ENCODE measurements at regions of chr19 and their contacts with region 1.

Region 1: GRCh38 chr19:30682999-30683536 is 310.9 kb downstream of the ZNF536 start:
- DNase-seq: no peak
- H3K4me3 ChIP-seq: no peak overlapping the region
- H3K27ac ChIP-seq: no peak overlapping the region
- H3K4me1 ChIP-seq: peaks cover 0 to 26% (median 19%) of the 10 kb centered on the region in 4 donors
- H3K27me3 ChIP-seq: peaks cover 0 to 43% (median 0%) of the 10 kb centered on the region in 4 donors
- CTCF ChIP-seq: peak; percentile 89 to 96 (median 91)
- EP300 ChIP-seq: no peak
- POLR2A ChIP-seq: no peak

Region 2: GRCh38 chr19:30630289-30631079 is 52.6 kb before region 1 on chr19:
- intact Hi-C with region 1: no loop called
- DNase-seq: peak; percentile 74
- H3K4me3 ChIP-seq: no peak overlapping the region
- H3K27ac ChIP-seq: no peak overlapping the region
- H3K4me1 ChIP-seq: peaks cover 0 to 4% (median 0%) of the 10 kb centered on the region in 4 donors
- H3K27me3 ChIP-seq: peaks cover 0 to 8% (median 0%) of the 10 kb centered on the region in 4 donors
- CTCF ChIP-seq: no peak
- EP300 ChIP-seq: no peak
- POLR2A ChIP-seq: no peak

Region 3: GRCh38 chr19:30742406-30742938 is 59.4 kb after region 1 on chr19:
- intact Hi-C with region 1: no loop called
- DNase-seq: no peak
- H3K4me3 ChIP-seq: no peak overlapping the region
- H3K27ac ChIP-seq: no peak overlapping the region
- H3K4me1 ChIP-seq: no peaks in the 10 kb centered on the region
- H3K27me3 ChIP-seq: peaks cover 0 to 22% (median 0%) of the 10 kb centered on the region in 4 donors
- CTCF ChIP-seq: no peak
- EP300 ChIP-seq: no peak
- POLR2A ChIP-seq: no peak

Region 4: GRCh38 chr19:31350701-31351068 is 667.6 kb after region 1 on chr19:
- intact Hi-C with region 1: loop called (anchors 10 kb)
- DNase-seq: no peak
- H3K4me3 ChIP-seq: peak overlapping the region; percentile 76 to 98 (median 88)
- H3K27ac ChIP-seq: peak overlapping the region; percentile 93 to 99 (median 96)
- H3K4me1 ChIP-seq: peaks cover 21 to 67% (median 53%) of the 10 kb centered on the region in 4 donors
- H3K27me3 ChIP-seq: peaks cover 0 to 12% (median 0%) of the 10 kb centered on the region in 4 donors
- CTCF ChIP-seq: no peak
- EP300 ChIP-seq: no peak
- POLR2A ChIP-seq: no peak

Region 5: DNA sequence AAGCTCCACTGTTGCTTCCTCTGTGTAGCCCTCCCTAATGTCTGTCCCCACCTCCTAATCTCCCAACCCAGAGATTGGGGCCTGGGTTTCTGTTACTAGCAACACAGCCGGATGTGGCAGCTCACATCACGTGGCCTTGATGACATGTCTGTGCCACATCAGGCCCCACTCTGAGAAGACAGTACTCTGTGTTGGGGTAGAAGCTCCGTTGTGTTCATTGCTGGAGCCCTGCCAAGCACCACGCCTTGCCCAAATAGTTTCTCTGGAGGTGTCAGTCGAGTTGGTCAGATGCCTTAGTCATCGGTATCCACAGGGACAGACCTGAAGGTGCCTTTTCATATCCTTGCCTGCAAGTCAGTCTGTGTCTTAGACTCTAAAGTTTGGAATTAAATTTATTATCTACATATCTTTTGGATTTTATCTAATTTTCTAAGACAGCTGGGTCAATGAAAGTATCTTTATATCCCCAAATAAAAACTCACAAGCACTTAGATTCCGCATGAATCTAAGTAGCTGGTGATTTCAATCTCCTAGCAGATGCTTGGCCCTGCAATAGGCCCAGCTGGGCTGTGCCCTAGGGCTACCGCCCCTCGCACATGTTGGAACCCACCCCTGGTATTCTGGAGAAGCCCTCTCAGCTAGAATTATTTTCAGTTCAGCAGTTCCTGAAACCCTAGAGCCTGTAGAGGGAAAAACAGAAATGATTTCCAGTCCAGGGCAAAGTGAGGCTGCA is 870.2 kb after region 1 on chr19:
- intact Hi-C with region 1: loop called (anchors 10 kb)
- DNase-seq: no peak
- H3K4me3 ChIP-seq: no peak overlapping the region
- H3K27ac ChIP-seq: no peak overlapping the region
- H3K4me1 ChIP-seq: no peaks in the 10 kb centered on the region
- H3K27me3 ChIP-seq: no peaks in the 10 kb centered on the region
- CTCF ChIP-seq: no peak
- EP300 ChIP-seq: no peak
- POLR2A ChIP-seq: no peak

Region 6: GRCh38 chr19:32041681-32042292 is 1358.7 kb after region 1 on chr19:
- intact Hi-C with region 1: loop called (anchors 5 kb)
- DNase-seq: no peak
- H3K4me3 ChIP-seq: peak overlapping the region; percentile 29 to 47 (median 32)
- H3K27ac ChIP-seq: no peak overlapping the region
- H3K4me1 ChIP-seq: peaks cover 0 to 35% (median 26%) of the 10 kb centered on the region in 4 donors
- H3K27me3 ChIP-seq: peaks cover 0 to 31% (median 2%) of the 10 kb centered on the region in 4 donors
- CTCF ChIP-seq: peak; percentile 69 to 89 (median 81)
- EP300 ChIP-seq: no peak
- POLR2A ChIP-seq: no peak

Region 7: GRCh38 chr19:32224371-32225244 is 1541.5 kb after region 1 on chr19:
- intact Hi-C with region 1: loop called (anchors 5 kb)
- DNase-seq: no peak
- H3K4me3 ChIP-seq: peak overlapping the region; percentile 8 to 41 (median 29)
- H3K27ac ChIP-seq: no peak overlapping the region
- H3K4me1 ChIP-seq: peaks cover 4 to 10% (median 7%) of the 10 kb centered on the region in 4 donors
- H3K27me3 ChIP-seq: peaks cover 0 to 55% (median 8%) of the 10 kb centered on the region in 4 donors
- CTCF ChIP-seq: peak in 2 of 3 experiments; percentile 97 to 99
- EP300 ChIP-seq: no peak
- POLR2A ChIP-seq: no peak

Measured in esophagus muscularis mucosa (tissue), 4 donors.